ENCODE measurements at regions of chr11 and their contacts with region 1.

Region 1: GRCh38 chr11:93741094-93741881 is at the starts of genes C11orf54 and TAF1D:
- DNase-seq: peak; percentile 98
- ATAC-seq: peak; percentile 90
- total RNA-seq, gene C11orf54: 52.7 to 61.4 TPM
- total RNA-seq, gene TAF1D: 71.5 to 80.6 TPM

Region 2: DNA sequence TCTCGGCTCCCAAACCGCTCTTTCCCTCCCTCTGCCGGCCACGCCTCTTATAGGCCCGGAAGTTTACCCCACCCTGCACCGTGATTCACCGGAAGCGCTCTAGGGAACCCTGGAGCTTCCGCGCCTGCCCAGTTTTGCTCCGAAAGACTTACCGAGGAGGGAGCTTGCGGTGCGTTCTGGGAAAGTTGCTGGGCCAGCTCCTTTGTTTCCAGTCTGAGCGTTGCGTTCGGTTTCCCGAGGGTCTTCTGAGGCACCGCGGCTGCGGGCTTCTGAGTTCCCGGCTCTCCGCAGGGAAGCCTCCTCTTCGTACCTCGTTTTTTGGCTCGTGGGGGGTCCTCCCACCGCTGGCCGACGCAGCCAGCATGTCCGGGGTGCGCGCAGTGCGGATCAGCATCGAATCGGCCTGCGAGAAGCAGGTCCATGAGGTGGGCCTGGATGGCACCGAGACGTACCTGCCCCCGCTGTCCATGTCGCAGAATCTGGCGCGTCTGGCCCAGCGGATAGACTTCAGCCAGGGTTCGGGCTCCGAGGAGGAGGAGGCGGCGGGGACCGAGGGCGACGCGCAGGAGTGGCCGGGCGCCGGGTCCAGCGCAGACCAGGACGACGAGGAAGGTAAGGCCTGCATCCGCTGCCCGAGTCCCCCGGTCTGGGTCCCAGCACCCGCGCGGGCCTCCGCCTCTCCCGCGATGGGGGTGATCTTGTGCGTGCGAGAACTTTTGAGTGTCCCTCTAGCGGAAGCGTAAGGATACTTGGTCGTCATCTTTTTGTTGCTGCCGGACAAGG is 43.1 kb after region 1 on chr11 and contains the start of gene MED17:
- intact Hi-C with region 1: loop called in 1 of 2 experiments (anchors 5 kb)
- DNase-seq: peak; percentile 92 to 94
- ATAC-seq: peak; percentile 99
- total RNA-seq, gene MED17: 22.6 to 25.6 TPM

Measured in left colon (tissue), 2 donors.